PC-3 (cell line): ENCODE measurements at regions of chr14 and their contacts with region 1.

Region 1: GRCh38 chr14:73173092-73173735 is 36.9 kb downstream of the PSEN1 start:
- DNase-seq: peak; percentile 82
- ATAC-seq: peak; percentile 84
- H3K4me3 ChIP-seq: no peak overlapping the region
- H3K27ac ChIP-seq: no peak overlapping the region
- H3K4me1 ChIP-seq: no peaks in the 10 kb centered on the region
- H3K27me3 ChIP-seq: no peaks in the 10 kb centered on the region
- CTCF ChIP-seq: peak; percentile 91

Region 2: DNA sequence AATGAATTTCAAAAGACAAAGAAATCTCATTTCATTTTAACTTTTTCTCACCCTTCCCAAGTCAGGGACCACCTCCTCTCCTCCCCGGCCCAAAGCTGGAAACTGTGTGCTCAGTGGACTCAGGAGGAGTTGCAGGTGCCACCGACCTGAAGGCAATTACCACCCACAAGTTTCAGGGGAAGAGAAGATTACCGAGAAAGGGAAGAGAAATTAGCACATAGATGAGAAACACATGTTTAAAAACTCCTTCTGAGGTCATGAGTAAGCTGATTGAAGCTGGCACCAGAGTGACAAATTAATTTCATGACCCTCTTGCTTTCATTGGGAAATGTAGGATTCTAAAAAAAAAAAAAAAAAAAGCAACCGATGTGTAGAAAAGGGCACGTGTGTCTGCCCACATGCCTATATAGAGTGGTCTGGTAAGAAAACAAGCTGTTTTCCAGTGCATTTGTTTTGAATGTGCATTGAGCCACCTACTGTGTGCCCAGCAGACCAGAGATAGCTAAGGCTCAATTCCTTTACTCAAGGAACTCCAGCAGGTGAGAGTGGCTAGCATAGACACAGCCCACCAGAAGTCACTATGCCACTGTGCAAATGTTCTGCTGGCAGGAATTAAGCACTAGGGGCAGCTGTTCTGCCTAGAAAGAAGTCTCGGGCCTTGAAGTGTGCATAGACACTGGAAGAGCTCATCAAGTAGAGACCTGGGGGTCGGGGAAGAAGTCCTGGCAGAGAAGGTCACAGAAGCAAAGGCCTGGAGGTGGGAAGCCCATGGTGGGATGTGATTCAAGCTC is 309.8 kb before region 1 on chr14:
- CTCF ChIA-PET with region 1: no interaction called
- POLR2A ChIA-PET with region 1: no interaction called
- intact Hi-C with region 1: no loop called
- DNase-seq: no peak
- ATAC-seq: no peak
- H3K4me3 ChIP-seq: no peak overlapping the region
- H3K27ac ChIP-seq: no peak overlapping the region
- H3K4me1 ChIP-seq: no peaks in the 10 kb centered on the region
- H3K27me3 ChIP-seq: no peaks in the 10 kb centered on the region
- CTCF ChIP-seq: no peak

Region 3: DNA sequence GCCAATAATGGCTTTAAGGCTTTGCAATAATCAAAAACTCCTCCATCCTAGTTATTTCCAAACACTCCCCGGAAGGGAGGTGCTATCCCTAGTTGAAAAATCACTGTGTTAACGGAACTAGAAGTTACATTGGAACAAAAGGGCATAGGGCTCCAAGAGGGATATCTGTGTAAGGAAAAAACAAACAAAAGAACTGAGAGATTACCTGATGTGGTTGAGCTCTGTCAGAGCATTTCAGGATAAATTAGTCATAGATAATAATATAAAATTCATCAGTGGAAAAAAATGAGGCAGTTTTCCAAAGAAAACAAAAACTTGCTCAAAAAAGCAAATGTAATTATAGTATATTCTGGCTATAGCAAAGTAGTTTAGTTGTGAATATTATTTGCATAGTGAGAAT is 36.7 kb after region 1 on chr14:
- CTCF ChIA-PET with region 1: interaction called, 6 read pairs
- POLR2A ChIA-PET with region 1: no interaction called
- intact Hi-C with region 1: loop called (anchors 5 kb)
- DNase-seq: peak; percentile 96
- ATAC-seq: peak; percentile 99
- H3K4me3 ChIP-seq: peak overlapping the region; percentile 15; the same call in 1 of the 2 replicates
- H3K27ac ChIP-seq: peak overlapping the region; percentile 86
- H3K4me1 ChIP-seq: peaks cover 28% of the 10 kb centered on the region
- H3K27me3 ChIP-seq: no peaks in the 10 kb centered on the region
- CTCF ChIP-seq: no peak

Region 4: GRCh38 chr14:73227812-73228781 is 54.9 kb after region 1 on chr14:
- CTCF ChIA-PET with region 1: interaction called, 10 read pairs
- POLR2A ChIA-PET with region 1: no interaction called
- intact Hi-C with region 1: no loop called
- DNase-seq: peak; percentile 97
- ATAC-seq: peak; percentile 88
- H3K4me3 ChIP-seq: peak overlapping the region; percentile 40; the same call in 1 of the 2 replicates
- H3K27ac ChIP-seq: peak overlapping the region; percentile 88
- H3K4me1 ChIP-seq: peaks cover 23% of the 10 kb centered on the region
- H3K27me3 ChIP-seq: no peaks in the 10 kb centered on the region
- CTCF ChIP-seq: no peak

Region 5: GRCh38 chr14:73239393-73240241 is 66.4 kb after region 1 on chr14:
- CTCF ChIA-PET with region 1: interaction called, 5 read pairs
- POLR2A ChIA-PET with region 1: no interaction called
- intact Hi-C with region 1: loop called (anchors 2 kb)
- DNase-seq: peak; percentile 47
- ATAC-seq: peak; percentile 12
- H3K4me3 ChIP-seq: peak overlapping the region; percentile 62
- H3K27ac ChIP-seq: no peak overlapping the region
- H3K4me1 ChIP-seq: peaks cover 30% of the 10 kb centered on the region
- H3K27me3 ChIP-seq: peaks cover 50% of the 10 kb centered on the region
- CTCF ChIP-seq: peak; percentile 25; the same call in 1 of the 2 replicates

Region 6: DNA sequence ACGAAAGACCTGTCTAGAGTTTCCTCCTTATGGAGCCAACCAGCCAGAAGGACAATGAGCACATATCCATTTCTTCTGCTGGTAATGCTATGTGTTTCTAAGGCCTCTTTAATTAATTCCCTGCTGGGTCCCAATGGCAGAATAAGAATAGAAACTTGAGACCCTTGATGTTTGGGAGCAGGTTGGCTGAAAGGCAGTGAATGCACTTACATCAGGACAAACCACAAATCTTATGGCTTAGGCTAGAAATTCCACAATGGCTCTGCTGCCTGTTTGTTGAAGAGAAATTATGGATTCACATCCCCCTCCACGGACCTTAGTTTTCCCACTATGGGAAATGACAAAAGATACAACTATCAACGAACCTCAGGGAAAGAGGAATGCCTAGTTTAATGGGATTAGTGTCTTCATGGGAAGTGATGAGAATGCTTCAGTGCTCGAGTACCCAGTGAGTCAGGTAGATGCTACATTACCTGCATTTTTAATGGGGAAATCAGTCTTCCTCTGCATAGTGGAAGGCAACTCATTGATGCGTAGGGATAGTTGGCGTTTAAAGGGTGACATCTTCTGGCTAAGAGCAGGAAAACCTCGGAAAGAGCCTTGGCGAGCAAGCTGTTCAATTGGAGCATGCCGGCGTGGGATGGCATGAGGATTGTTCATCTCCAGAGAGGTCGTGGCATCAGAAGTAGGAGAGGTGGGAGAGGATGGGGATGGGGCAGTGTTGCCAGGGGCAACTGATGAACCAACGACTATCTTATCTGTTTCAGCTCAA is 110.6 kb after region 1 on chr14:
- CTCF ChIA-PET with region 1: interaction called, 32 read pairs
- POLR2A ChIA-PET with region 1: no interaction called
- intact Hi-C with region 1: loop called (anchors 1 kb)
- DNase-seq: peak; percentile 75
- ATAC-seq: peak; percentile 76
- H3K4me3 ChIP-seq: no peak overlapping the region
- H3K27ac ChIP-seq: no peak overlapping the region
- H3K4me1 ChIP-seq: peaks cover 9% of the 10 kb centered on the region; the same call in 1 of the 2 replicates
- H3K27me3 ChIP-seq: no peaks in the 10 kb centered on the region
- CTCF ChIP-seq: peak; percentile 86

Region 7: DNA sequence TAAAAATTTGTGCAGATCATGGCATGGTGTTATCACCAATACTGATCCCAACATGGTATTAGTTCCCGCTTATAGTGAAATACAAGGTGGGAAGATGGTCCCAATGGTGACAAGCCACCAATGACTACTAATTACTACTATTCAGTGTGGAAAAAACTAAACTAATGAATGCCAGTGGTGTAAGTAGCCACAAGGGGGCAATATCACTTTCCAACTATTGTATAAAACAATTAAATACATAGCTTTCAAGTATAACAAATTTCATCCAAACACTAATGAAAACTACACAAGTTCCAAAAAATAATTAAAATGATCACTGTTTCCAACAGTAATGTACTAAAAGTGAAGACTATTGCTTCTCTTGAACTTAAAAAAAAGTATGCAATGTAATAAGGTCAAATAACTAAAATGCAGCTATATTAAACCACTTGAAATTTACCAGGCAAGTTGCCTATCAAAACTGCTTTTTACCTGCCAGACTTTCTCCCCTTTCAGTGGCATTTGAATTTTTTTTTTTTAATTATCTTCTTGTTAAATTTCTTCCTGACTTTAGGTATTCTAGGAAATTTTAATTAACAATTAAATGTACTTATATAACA is 122.1 kb after region 1 on chr14:
- CTCF ChIA-PET with region 1: interaction called, 24 read pairs
- POLR2A ChIA-PET with region 1: interaction called, 3 read pairs
- intact Hi-C with region 1: no loop called
- DNase-seq: peak; percentile 78
- ATAC-seq: peak; percentile 36
- H3K4me3 ChIP-seq: no peak overlapping the region
- H3K27ac ChIP-seq: no peak overlapping the region
- H3K4me1 ChIP-seq: peaks cover 7% of the 10 kb centered on the region
- H3K27me3 ChIP-seq: no peaks in the 10 kb centered on the region
- CTCF ChIP-seq: peak; percentile 98

Region 8: GRCh38 chr14:73365727-73366126 is 192.5 kb after region 1 on chr14:
- CTCF ChIA-PET with region 1: no interaction called
- POLR2A ChIA-PET with region 1: no interaction called
- intact Hi-C with region 1: no loop called
- DNase-seq: no peak
- ATAC-seq: no peak
- H3K4me3 ChIP-seq: no peak overlapping the region
- H3K27ac ChIP-seq: no peak overlapping the region
- H3K4me1 ChIP-seq: no peaks in the 10 kb centered on the region
- H3K27me3 ChIP-seq: no peaks in the 10 kb centered on the region
- CTCF ChIP-seq: no peak

Region 9: DNA sequence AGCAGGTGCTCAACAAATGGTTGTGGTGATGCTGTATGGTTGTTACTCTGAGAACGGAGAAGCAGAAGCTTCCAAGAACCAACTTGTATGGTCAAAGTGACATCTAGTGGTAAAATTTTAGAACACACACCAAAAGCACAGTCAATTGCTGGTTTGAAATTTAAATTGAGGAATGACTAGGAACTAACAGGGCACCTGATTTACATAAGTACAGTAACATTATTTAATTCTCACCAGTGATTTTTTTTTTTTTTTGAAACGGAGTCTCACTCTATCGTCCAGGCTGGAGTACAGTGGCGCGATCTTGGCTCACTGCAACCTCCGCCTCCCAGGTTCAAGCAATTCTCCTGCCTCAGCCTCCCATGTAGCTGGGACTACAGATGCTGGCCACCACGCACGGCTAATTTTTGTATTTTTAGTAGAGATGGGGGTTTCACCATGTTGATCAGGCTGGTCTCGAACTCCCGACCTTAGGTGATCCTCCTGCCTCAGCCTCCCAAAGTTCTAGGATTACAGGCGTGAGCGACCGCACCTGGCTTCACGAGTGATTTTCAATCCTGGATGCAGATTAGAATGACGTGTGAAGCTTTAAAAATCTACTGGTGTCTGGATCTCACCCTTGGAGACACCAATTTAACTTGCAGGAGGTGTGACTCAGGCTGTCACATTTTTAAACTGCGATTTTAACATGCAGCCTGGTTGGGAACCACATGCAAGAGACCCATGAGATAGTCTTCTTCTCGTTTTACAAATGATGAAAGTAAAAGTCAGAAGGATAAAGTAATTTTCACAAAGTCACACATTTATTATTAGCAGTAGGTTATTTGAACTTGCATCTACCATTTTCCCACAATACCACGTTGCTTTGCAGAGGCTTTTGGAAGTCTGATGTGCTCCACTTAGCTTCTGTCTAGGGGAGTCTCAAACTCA is 299.2 kb after region 1 on chr14:
- CTCF ChIA-PET with region 1: interaction called, 6 read pairs
- POLR2A ChIA-PET with region 1: no interaction called
- intact Hi-C with region 1: loop called (anchors 1 kb)
- DNase-seq: peak; percentile 87
- ATAC-seq: peak; percentile 88
- H3K4me3 ChIP-seq: no peak overlapping the region
- H3K27ac ChIP-seq: no peak overlapping the region
- H3K4me1 ChIP-seq: no peaks in the 10 kb centered on the region
- H3K27me3 ChIP-seq: no peaks in the 10 kb centered on the region
- CTCF ChIP-seq: peak; percentile 89

Region 10: GRCh38 chr14:73958591-73958990 is 785.4 kb after region 1 on chr14:
- CTCF ChIA-PET with region 1: no interaction called
- POLR2A ChIA-PET with region 1: no interaction called
- intact Hi-C with region 1: no loop called
- DNase-seq: no peak
- ATAC-seq: no peak
- H3K4me3 ChIP-seq: no peak overlapping the region
- H3K27ac ChIP-seq: no peak overlapping the region
- H3K4me1 ChIP-seq: no peaks in the 10 kb centered on the region
- H3K27me3 ChIP-seq: no peaks in the 10 kb centered on the region
- CTCF ChIP-seq: no peak